T-cell (primary cell): ENCODE measurements at regions of chr19 and their contacts with region 1.

Region 1: DNA sequence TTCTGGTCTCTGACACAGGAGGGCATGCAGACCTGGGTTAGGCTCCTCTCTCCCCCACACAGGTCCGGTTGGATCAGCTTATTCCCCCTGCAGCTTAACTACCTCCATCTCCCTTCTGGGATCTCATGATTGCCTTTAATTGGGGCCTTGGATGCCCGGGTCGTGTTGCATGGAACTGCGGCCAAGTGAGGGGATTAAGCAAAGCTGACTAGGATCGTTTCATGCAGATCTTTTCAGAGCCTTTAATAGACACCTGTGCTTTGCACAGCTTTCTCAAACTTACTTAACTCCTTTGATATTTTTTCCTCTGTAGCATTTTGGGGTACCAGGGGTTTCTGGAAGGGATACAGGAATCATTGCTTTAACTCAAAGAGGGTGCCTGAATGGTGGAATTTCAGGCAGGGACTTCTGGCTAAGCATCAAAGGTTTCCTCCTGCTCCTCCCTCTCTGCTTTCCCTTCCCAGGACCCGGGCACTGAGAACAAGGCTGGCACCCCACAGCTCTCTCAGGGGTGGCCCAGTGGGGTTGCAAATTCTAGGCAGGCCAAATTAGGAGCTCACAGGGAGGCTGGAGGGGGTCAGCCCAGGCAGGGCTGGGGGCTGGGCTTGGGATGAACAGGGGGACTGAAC is 477 bp downstream of the NFILZ start:
- DNase-seq: no peak
- ATAC-seq: no peak
- H3K4me3 ChIP-seq: no peak overlapping the region
- H3K4me3 Mint-ChIP-seq: no peak overlapping the region
- H3K27ac ChIP-seq: no peak overlapping the region
- H3K27ac Mint-ChIP-seq: no peak overlapping the region
- H3K4me1 ChIP-seq: peaks cover 0 to 5% of the 10 kb centered on the region in 2 experiments
- H3K4me1 Mint-ChIP-seq: no peaks in the 10 kb centered on the region
- H3K27me3 ChIP-seq: peaks cover 0 to 8% of the 10 kb centered on the region in 2 experiments
- H3K27me3 Mint-ChIP-seq: no peaks in the 10 kb centered on the region

Region 2: GRCh38 chr19:7004313-7004931 is 1626.5 kb before region 1 on chr19:
- CTCF ChIA-PET with region 1: no interaction called
- POLR2A ChIA-PET with region 1: interaction called in 1 of 2 experiments, 11 read pairs
- DNase-seq: peak in 3 of 35 experiments; percentile 7 to 64 (median 21)
- ATAC-seq: peak in 1 of 4 experiments; percentile 61
- H3K4me3 ChIP-seq: no peak overlapping the region
- H3K4me3 Mint-ChIP-seq: peak overlapping the region in 1 of 3 donors; percentile 32
- H3K27ac ChIP-seq: no peak overlapping the region
- H3K27ac Mint-ChIP-seq: no peak overlapping the region
- H3K4me1 ChIP-seq: peaks cover 15 to 18% of the 10 kb centered on the region in 2 experiments
- H3K4me1 Mint-ChIP-seq: peaks cover 32 to 46% (median 42%) of the 10 kb centered on the region in 3 donors
- H3K27me3 ChIP-seq: no peaks in the 10 kb centered on the region
- H3K27me3 Mint-ChIP-seq: no peaks in the 10 kb centered on the region

Region 3: DNA sequence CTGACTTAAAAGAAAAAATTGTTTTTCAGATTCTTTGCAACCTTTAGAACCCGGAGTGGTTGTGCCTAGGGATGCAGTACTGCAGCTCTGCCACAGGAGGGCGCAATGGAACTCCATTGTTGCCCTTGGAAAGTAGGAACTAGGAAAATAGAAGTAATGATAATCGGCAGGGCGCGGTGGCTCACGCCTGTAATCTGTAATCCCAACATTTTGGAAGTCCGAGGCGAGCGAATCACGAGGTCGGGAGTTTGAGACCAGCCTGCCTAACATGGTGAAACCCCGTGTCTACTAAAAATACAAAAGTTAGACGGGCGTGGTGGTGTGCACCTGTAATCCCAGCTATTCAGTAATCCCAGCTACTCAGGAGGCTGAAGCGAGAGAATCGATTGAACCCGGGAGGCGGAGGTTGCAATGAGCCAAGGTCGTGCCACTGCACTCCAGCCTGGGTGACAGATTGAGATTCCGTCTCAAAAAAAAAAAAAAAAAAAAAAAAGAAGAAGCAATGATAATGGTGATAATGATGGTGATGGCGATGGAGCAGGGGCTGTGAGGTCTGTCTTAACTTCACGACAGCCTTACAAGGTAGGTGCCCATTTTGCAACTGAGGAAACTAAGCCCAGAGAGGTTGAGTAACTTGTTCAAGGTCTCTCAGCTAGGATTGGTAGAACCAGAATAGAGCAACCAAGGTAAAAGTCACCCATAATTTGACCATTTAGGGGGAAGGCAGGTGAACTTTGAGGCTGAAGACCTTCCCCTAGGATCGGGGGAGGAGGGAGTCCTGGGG is 14.9 kb before region 1 on chr19:
- CTCF ChIA-PET with region 1: no interaction called
- POLR2A ChIA-PET with region 1: no interaction called
- DNase-seq: peak in 32 of 35 experiments; percentile 17 to 79 (median 48)
- ATAC-seq: peak in 1 of 4 experiments; percentile 43
- H3K4me3 ChIP-seq: no peak overlapping the region
- H3K4me3 Mint-ChIP-seq: peak overlapping the region in 1 of 3 donors; percentile 35
- H3K27ac ChIP-seq: no peak overlapping the region
- H3K27ac Mint-ChIP-seq: no peak overlapping the region
- H3K4me1 ChIP-seq: peaks cover 5 to 28% of the 10 kb centered on the region in 2 experiments
- H3K4me1 Mint-ChIP-seq: peaks cover 22 to 28% (median 28%) of the 10 kb centered on the region in 3 donors
- H3K27me3 ChIP-seq: peaks cover 0 to 7% of the 10 kb centered on the region in 2 experiments
- H3K27me3 Mint-ChIP-seq: peaks cover 3 to 9% of the 10 kb centered on the region in 2 donors